ENCODE measurements at regions of chr19 and their contacts with region 1.

Region 1: DNA sequence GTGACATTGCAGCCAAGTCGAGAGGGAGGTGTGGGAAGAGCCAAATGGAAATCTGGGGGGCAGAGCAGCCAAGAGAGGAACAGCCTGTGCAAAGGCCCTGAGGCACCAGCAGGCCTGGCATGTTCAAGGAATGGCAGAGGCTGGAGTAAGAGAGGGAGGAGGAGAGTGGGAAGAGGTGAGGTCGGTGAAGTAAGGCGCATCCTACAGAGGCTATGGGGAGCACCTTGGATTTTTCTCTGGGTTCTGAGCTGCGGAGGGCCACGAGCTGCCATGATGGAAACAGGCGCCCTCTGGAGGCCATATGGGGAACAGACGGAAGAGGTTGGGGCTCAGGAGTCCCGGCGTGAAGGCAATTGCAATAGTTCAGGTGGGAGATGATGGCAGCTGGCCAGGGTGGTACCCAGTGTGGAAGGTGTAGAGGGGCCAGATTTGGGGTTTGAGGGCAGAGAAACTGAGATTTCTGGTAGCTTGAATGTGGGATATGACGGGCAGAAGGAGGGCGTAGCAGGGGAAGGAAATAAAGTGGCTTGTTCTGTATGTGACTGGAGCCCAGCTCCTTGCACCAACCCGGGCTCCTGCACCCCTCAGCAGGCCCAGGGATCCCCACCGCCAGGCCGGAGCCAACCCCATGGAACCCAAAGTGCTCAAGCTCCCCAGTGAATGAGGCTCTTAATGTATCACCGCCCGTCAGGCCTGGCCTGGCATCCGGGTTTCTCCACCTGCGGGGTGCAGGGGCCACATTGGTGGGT is 20.5 kb upstream of the STRN4 start:
- DNase-seq: peak; percentile 51 to 65 (median 58)
- H3K4me3 ChIP-seq: no peak overlapping the region
- H3K27ac ChIP-seq: no peak overlapping the region
- H3K4me1 ChIP-seq: no peaks in the 10 kb centered on the region
- H3K27me3 ChIP-seq: no peaks in the 10 kb centered on the region

Region 2: GRCh38 chr19:46753420-46754155 is 13.2 kb before region 1 on chr19:
- CTCF ChIA-PET with region 1: interaction called, 39 read pairs
- POLR2A ChIA-PET with region 1: no interaction called
- DNase-seq: peak; percentile 53 to 80 (median 79)
- H3K4me3 ChIP-seq: no peak overlapping the region
- H3K27ac ChIP-seq: no peak overlapping the region
- H3K4me1 ChIP-seq: peaks cover 0 to 15% (median 8%) of the 10 kb centered on the region in 4 experiments
- H3K27me3 ChIP-seq: no peaks in the 10 kb centered on the region

Region 3: GRCh38 chr19:46776927-46777911 is 10.5 kb after region 1 on chr19:
- CTCF ChIA-PET with region 1: interaction called, 12 read pairs
- POLR2A ChIA-PET with region 1: no interaction called
- DNase-seq: no peak
- H3K4me3 ChIP-seq: no peak overlapping the region
- H3K27ac ChIP-seq: no peak overlapping the region
- H3K4me1 ChIP-seq: peaks cover 0 to 17% (median 7%) of the 10 kb centered on the region in 4 experiments
- H3K27me3 ChIP-seq: no peaks in the 10 kb centered on the region